ENCODE measurements at regions of chr2 and their contacts with region 1.

Region 1: GRCh38 chr2:215931256-215931903 is 82.0 kb downstream of the MREG start:
- DNase-seq: peak; percentile 58
- H3K4me3 ChIP-seq: no peak overlapping the region
- H3K27ac ChIP-seq: no peak overlapping the region
- H3K4me1 ChIP-seq: no peaks in the 10 kb centered on the region
- H3K27me3 ChIP-seq: no peaks in the 10 kb centered on the region
- CTCF ChIP-seq: peak; percentile 78 to 95 (median 87)
- EP300 ChIP-seq: no peak
- POLR2A ChIP-seq: no peak

Region 2: DNA sequence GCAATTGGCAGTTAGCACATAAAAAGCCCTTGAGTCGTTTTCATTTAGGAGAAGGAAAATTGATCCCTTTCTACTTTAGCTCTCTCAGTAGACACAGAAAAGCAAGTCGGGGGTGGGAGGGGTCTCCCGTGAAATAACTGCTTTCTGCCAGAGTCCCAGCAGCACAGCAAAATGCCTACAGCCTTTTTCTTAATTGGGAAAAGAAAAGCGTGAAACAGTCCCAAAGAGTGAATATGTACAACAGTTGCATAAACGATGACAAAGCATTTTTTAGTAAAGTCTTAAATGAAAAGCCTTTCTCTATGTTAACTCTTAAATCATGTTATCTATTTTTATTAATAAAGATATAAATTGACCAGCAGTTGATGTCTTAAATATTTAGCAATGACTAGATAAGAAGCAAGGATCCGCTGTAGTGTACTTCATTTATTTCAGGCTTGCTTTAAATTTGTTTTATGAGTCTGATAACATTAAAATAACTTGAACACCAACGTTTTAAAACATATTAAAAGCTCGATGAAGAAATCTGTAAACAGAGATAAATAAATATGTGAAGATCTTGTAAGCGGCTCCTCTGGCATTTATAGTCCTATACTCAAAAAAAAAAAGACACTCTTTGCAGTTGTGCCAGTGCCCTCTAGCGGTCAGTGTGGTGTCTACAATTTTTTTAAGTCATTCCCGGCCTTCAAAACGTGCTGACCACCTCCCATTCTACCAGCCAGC is 661.8 kb before region 1 on chr2:
- in situ Hi-C with region 1: loop called in 1 of 4 experiments (anchors 25 kb)
- intact Hi-C with region 1: no loop called
- DNase-seq: peak; percentile 65
- H3K4me3 ChIP-seq: no peak overlapping the region
- H3K27ac ChIP-seq: no peak overlapping the region
- H3K4me1 ChIP-seq: peaks cover 0 to 5% (median 4%) of the 10 kb centered on the region in 4 donors
- H3K27me3 ChIP-seq: no peaks in the 10 kb centered on the region
- CTCF ChIP-seq: peak; percentile 59 to 90 (median 80)
- EP300 ChIP-seq: no peak
- POLR2A ChIP-seq: no peak

Region 3: DNA sequence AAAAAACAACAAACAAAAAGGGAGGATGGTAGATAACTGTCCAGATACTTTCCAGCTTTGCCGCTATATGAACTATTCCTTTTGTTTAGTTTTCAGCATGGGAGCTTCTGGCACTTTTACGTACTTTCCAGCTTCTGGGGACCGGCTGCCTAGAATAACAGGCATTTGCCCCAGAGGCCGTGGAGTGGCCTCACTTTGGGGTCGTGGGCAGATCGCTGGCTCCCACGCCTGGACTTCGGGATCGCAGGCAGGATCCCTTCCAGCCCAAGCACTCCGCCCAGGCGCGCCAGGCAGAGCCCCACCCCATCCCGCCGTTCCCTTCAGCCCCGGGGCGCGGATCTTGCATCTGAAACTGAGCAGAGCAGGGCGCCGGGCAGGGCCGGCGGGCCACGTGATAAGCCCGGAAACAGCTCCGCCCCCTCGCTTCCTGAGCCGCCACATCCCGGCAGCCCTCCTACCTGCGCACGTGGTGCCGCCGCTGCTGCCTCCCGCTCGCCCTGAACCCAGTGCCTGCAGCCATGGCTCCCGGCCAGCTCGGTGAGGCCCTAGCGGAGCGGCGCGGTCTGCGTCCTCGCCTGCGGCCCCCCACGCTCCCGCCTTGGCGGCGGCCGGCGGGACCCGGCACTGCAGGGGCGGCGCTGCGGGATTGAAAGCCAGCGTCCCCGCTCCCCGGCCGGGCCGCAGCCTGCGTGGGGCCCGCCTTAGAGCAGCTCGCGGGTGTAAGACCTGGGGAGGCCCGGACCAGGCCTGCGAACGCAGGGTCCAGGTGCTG is 619.6 kb before region 1 on chr2 and contains the start of gene ATIC:
- in situ Hi-C with region 1: loop called in 1 of 4 experiments (anchors 25 kb)
- intact Hi-C with region 1: no loop called
- DNase-seq: peak; percentile 97
- H3K4me3 ChIP-seq: peak within 1 kb of the TSS; percentile 65 to 72 (median 68)
- H3K27ac ChIP-seq: peak within 1 kb of the TSS; percentile 86 to 89 (median 88)
- H3K4me1 ChIP-seq: peaks cover 7 to 22% (median 12%) of the 10 kb centered on the region in 4 donors
- H3K27me3 ChIP-seq: no peaks in the 10 kb centered on the region
- CTCF ChIP-seq: peak in 2 of 5 experiments; percentile 3 to 32
- EP300 ChIP-seq: no peak
- POLR2A ChIP-seq: peak; percentile 50
- total RNA-seq, gene ATIC: 35.1 to 88.6 (median 60.7) TPM

Region 4: DNA sequence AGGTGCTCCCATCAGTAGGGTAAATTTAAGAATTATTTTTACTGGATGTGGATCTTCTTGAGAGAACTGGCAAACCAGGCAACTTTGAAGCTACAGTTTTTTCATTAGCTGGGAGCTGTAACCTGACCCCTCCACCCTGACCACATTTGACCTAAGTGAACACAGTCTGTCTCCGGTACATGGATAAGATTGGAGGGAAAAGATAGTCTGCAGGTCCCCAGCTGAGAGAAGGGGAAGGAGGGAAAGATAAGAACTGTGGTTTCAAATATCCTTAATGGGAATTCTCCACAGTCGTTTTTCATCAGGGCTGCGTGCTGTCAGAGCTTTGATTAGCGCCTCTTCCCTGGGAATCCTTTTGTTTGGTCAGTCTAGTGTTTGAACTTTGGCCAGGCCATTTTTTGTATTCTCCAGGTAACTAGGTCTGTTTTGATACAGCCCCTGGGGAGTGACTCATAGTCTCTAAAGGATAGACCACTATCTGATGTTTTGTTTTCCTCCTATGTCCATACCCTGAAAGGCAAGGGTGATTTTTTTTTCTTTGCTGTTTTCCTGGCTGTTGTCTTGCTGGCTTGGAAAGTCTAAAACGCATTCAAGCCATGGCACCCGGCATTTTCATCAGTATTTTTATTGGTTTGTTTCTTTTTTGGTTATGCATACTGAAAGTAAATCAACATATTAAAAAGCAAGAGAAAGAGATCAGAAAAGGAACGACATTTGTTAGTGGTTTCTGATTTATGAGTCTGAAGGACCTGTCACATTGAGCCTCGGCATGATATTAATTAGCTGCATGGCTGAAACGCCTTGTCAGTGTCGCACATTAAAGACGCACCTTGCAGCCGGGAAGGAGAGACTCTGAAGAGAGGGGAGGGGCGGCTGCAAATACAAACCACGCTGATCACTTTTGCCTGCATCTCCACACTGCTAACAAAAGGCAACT is 312.1 kb before region 1 on chr2:
- in situ Hi-C with region 1: no loop called
- intact Hi-C with region 1: no loop called
- DNase-seq: no peak
- H3K4me3 ChIP-seq: no peak overlapping the region
- H3K27ac ChIP-seq: no peak overlapping the region
- H3K4me1 ChIP-seq: peaks cover 0 to 5% (median 1%) of the 10 kb centered on the region in 4 donors
- H3K27me3 ChIP-seq: no peaks in the 10 kb centered on the region
- CTCF ChIP-seq: no peak
- EP300 ChIP-seq: no peak
- POLR2A ChIP-seq: no peak

Region 5: GRCh38 chr2:215845839-215846586 is 85.4 kb before region 1 on chr2:
- in situ Hi-C with region 1: no loop called
- intact Hi-C with region 1: no loop called
- DNase-seq: no peak
- H3K4me3 ChIP-seq: no peak overlapping the region
- H3K27ac ChIP-seq: no peak overlapping the region
- H3K4me1 ChIP-seq: peaks cover 0 to 15% (median 6%) of the 10 kb centered on the region in 4 donors
- H3K27me3 ChIP-seq: no peaks in the 10 kb centered on the region
- CTCF ChIP-seq: no peak
- EP300 ChIP-seq: no peak
- POLR2A ChIP-seq: no peak

Region 6: GRCh38 chr2:215994901-215995300 is 63.5 kb after region 1 on chr2:
- in situ Hi-C with region 1: no loop called
- intact Hi-C with region 1: no loop called
- DNase-seq: no peak
- H3K4me3 ChIP-seq: no peak overlapping the region
- H3K27ac ChIP-seq: no peak overlapping the region
- H3K4me1 ChIP-seq: no peaks in the 10 kb centered on the region
- H3K27me3 ChIP-seq: no peaks in the 10 kb centered on the region
- CTCF ChIP-seq: no peak
- EP300 ChIP-seq: no peak
- POLR2A ChIP-seq: no peak

Measured in transverse colon (tissue), 4 donors.